ENCODE measurements at regions of chr9 and their contacts with region 1.

Region 1: GRCh38 chr9:135437259-135437658 is 42.3 kb upstream of the PPP1R26 start:
- DNase-seq: no peak
- H3K4me3 ChIP-seq: no peak overlapping the region
- H3K27ac ChIP-seq: no peak overlapping the region
- H3K4me1 ChIP-seq: peaks cover 0 to 11% (median 0%) of the 10 kb centered on the region in 4 donors
- H3K27me3 ChIP-seq: peaks cover 0 to 7% of the 10 kb centered on the region in 2 donors
- CTCF ChIP-seq: no peak

Region 2: DNA sequence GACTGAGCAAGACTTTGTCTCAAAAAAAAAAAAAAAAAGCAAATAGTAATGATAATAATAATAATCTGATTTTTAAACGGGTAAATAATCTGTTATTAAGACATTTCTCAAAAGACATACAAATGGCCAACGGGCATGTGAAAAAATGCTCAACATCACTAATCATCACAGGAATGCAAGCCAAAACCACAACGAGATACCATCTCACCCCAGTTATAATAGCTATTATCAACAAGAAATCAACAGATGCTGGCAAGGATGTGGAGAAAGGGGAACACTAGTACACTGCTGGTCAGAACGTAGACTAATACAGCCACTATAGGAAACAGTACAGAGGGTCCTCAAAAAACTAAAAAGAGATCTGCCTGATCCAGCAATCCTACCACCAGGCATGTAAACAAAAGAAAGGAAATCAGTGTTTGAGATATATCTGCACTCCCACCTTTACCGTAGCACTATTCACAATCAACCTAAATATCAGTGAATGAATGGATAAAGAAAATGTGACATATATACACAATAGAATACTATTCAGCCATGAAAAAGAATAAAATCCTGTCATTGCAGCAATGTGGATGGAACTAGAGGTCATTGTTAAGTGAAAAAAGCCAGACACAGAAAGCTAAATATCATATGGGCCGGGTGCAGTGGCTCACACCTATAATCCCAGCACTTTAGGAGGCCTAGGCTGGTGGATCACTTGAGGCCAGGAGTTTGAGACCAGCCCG is 1470.1 kb before region 1 on chr9:
- intact Hi-C with region 1: loop called (anchors 5 kb)
- DNase-seq: no peak
- H3K4me3 ChIP-seq: no peak overlapping the region
- H3K27ac ChIP-seq: no peak overlapping the region
- H3K4me1 ChIP-seq: peaks cover 0 to 5% (median 0%) of the 10 kb centered on the region in 4 donors
- H3K27me3 ChIP-seq: no peaks in the 10 kb centered on the region
- CTCF ChIP-seq: no peak

Region 3: GRCh38 chr9:135108831-135109510 is 328.3 kb before region 1 on chr9:
- intact Hi-C with region 1: no loop called
- DNase-seq: no peak
- H3K4me3 ChIP-seq: no peak overlapping the region
- H3K27ac ChIP-seq: no peak overlapping the region
- H3K4me1 ChIP-seq: peaks cover 0 to 8% (median 4%) of the 10 kb centered on the region in 4 donors
- H3K27me3 ChIP-seq: peaks cover 0 to 70% of the 10 kb centered on the region in 2 donors
- CTCF ChIP-seq: no peak

Measured in tibial artery (tissue), 4 donors.